Activated B cell treated with CpG ODN at 0.5 μM for 24 hours (primary cell): ENCODE measurements at regions of chr6 and their contacts with region 1.

Region 1: DNA sequence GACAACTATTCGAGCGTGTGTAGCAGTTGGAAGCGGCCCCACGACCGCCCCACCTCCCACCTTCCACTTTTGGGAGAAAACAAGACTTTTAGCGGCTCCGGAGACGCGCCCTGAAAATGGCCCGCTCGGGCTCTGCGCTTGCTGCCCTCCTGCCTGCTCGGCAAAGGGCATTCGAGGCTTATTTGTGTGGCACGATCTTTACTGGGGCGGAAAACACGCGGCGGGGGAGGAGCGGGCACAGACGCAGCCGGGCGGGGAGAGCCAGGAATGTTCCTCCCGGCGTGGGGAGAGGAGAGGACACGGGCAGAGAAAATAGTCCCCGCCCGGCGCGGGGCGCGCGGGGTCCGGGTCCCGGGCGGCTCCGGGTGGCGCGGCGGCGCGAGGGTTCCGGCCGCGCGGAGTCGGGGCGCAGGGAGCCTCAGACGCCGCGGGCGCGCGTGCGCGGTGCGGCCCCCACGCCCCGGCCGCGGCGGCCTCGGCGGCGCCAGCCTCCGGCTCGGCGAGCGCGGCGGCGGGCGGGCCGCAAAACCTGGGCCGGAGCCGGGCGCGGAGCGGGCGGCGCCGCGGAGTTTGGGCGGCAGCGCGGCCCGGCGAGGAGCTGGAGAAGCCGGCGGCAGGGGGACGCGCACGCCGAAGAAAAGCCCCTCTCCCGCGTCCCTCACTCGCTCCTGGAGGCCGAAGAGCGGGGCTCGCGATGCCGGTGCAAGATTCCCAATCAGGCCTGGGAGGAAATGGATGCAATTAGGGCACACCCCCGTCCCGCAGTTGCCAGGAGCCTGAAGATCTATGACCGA is 90.0 kb upstream of the ARID1B start:
- DNase-seq: peak; percentile 86
- ATAC-seq: peak; percentile 79
- H3K4me3 Mint-ChIP-seq: peak overlapping the region; percentile 94
- H3K27ac Mint-ChIP-seq: peak overlapping the region; percentile 98
- H3K4me1 Mint-ChIP-seq: peaks cover 62% of the 10 kb centered on the region
- H3K27me3 Mint-ChIP-seq: no peaks in the 10 kb centered on the region
- CTCF ChIP-seq: no peak

Region 2: GRCh38 chr6:155327326-155328073 is 1359.7 kb before region 1 on chr6:
- CTCF ChIA-PET with region 1: no interaction called
- POLR2A ChIA-PET with region 1: no interaction called
- intact Hi-C with region 1: loop called (anchors 2 kb)
- DNase-seq: no peak
- ATAC-seq: peak; percentile 62
- H3K4me3 Mint-ChIP-seq: no peak overlapping the region
- H3K27ac Mint-ChIP-seq: no peak overlapping the region
- H3K4me1 Mint-ChIP-seq: peaks cover 3% of the 10 kb centered on the region
- H3K27me3 Mint-ChIP-seq: no peaks in the 10 kb centered on the region
- CTCF ChIP-seq: peak; percentile 91

Region 3: GRCh38 chr6:156564127-156564806 is 122.9 kb before region 1 on chr6:
- CTCF ChIA-PET with region 1: interaction called, 7 read pairs
- POLR2A ChIA-PET with region 1: interaction called, 4 read pairs
- intact Hi-C with region 1: loop called (anchors 1 kb)
- DNase-seq: peak; percentile 78
- ATAC-seq: peak; percentile 100
- H3K4me3 Mint-ChIP-seq: no peak overlapping the region
- H3K27ac Mint-ChIP-seq: no peak overlapping the region
- H3K4me1 Mint-ChIP-seq: peaks cover 10% of the 10 kb centered on the region
- H3K27me3 Mint-ChIP-seq: peaks cover 5% of the 10 kb centered on the region
- CTCF ChIP-seq: peak; percentile 76

Region 4: GRCh38 chr6:156699017-156699421 is 11.8 kb after region 1 on chr6:
- CTCF ChIA-PET with region 1: interaction called, 4 read pairs
- POLR2A ChIA-PET with region 1: interaction called, 56 read pairs
- intact Hi-C with region 1: loop called (anchors 1 kb)
- DNase-seq: no peak
- ATAC-seq: peak; percentile 45
- H3K4me3 Mint-ChIP-seq: peak overlapping the region; percentile 74
- H3K27ac Mint-ChIP-seq: peak overlapping the region; percentile 92
- H3K4me1 Mint-ChIP-seq: peaks cover 79% of the 10 kb centered on the region
- H3K27me3 Mint-ChIP-seq: no peaks in the 10 kb centered on the region
- CTCF ChIP-seq: no peak

Region 5: DNA sequence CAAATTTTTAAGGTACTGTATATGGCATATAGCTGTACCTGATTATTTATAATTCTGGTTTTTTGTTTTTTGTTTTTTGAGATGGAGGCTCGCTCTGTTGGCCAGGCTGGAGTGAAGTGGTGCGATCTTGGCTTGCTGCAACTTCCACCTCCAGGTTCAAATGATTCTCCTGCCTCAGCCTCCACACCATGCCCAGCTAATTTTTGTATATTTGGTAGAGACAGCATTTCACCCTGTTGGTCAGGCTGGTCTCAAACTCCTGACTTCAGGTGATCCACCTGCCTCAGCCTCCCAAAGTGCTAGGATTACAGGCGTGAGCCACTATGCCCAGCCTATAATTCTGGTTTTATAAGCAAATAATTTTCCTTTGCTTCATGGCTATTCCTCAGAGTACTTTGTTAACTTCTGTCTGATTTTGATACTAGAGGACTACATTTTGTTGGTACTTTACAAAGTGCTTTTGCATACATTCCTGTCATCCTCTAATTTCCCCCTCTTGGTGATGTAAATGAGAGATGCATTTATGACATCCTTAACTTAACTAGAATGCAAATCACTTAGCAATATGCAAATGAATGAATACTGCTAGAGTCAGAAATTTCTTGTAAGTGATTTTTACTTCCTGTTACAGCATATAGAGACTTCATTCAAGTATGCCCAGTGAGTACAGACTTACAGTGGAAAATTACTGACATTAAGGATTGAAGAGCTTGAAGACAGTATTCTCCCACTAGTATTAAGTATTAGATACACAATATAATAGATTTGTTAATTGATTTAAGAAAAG is 54.3 kb after region 1 on chr6:
- CTCF ChIA-PET with region 1: no interaction called
- POLR2A ChIA-PET with region 1: interaction called, 4 read pairs
- intact Hi-C with region 1: loop called (anchors 2 kb)
- DNase-seq: no peak
- ATAC-seq: peak; percentile 86
- H3K4me3 Mint-ChIP-seq: peak overlapping the region; percentile 24
- H3K27ac Mint-ChIP-seq: peak overlapping the region; percentile 77
- H3K4me1 Mint-ChIP-seq: peaks cover 11% of the 10 kb centered on the region
- H3K27me3 Mint-ChIP-seq: no peaks in the 10 kb centered on the region
- CTCF ChIP-seq: no peak

Region 6: DNA sequence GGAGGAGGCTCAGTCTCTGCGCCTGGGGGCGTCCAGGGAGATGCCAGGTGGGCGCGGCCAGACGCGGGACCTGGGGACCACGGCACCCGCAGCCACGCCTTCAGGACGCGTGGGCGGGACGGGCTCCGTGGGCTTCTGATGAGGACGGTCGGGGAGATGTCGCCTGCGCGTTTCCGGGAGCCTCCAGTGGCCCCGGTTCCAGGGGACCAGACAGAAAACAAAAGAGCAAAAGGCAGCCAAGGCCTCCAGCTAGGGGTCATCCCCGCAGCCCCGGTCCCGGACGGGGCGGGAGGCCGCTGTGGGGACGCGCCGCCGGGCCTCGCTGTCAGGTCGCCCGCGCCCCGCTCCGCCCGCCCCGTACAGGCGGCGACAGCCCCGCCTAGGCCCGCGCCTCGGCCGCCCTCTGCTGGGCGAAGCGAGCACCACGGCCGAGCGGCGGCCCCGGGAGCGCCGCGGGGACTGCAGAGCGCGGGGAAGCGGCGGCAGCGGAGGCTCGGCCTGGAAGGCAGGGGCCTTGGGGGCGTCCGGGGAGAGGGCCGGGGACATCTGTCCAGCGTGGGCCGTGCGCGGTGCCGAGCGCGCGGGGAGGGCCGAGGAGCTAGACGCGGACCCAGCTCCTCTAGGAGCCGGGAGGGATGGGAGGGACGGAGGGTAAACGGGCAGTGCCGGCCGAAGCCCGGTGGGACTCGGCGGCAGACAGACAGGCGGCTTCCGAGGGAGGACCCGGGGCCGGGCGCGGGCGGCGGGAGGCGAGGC is 587.5 kb after region 1 on chr6:
- CTCF ChIA-PET with region 1: no interaction called
- POLR2A ChIA-PET with region 1: no interaction called
- intact Hi-C with region 1: loop called (anchors 2 kb)
- DNase-seq: peak; percentile 93
- ATAC-seq: peak; percentile 79
- H3K4me3 Mint-ChIP-seq: peak overlapping the region; percentile 94
- H3K27ac Mint-ChIP-seq: peak overlapping the region; percentile 96
- H3K4me1 Mint-ChIP-seq: peaks cover 9% of the 10 kb centered on the region
- H3K27me3 Mint-ChIP-seq: no peaks in the 10 kb centered on the region
- CTCF ChIP-seq: no peak